PC-3 (cell line): ENCODE measurements at regions of chr9 and their contacts with region 1.

Region 1: DNA sequence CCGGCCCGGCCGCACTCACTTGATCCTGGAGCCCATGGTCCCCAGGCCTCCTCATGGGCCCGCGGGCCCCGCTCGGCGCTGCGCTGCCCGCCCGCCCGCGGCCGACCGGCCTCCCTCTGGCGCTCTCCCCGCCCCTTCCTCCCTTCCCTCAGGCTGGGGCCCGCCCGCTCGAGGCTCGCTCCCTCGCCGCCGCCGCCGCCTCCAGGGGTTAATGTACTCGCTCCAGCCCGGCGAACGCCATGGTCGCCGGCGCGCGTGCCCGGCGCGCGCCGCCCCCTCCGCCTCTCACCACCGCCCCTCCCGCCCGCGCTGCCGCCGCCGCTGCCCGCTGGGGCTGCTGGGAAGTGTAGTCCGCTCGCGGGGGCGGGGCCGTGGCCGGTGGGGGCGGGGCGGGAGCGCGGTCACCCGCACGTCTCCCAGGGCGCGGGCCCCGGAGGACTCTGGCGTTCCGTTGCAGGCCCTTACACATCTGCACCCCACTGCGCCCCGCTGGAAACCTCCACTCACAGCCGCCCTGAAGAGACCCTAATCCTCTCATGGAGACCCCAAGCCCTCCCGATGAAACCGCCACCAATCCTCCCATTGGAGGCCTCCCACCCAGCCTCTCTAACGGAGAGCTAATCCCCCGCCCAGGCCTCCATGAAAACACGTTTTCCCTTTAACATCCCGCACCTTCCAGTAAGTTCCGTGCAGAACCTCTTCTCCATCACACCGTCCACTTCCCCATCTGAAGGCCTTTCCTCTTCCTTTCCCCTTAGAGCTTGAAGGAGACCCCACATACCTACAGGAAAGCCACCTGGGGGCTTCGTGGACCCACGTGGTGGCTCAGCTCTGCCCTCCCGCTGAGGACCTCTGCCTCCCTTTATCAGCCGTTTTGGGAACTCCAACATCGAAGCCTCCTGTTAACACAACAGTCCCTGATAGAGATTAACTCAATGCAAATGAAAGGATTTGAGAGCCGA is at the start of gene DENND1A:
- DNase-seq: peak; percentile 78
- ATAC-seq: peak; percentile 53
- H3K4me3 ChIP-seq: peak within 1 kb of the TSS; percentile 80
- H3K27ac ChIP-seq: peak within 1 kb of the TSS; percentile 43
- H3K4me1 ChIP-seq: peaks cover 73% of the 10 kb centered on the region
- H3K27me3 ChIP-seq: no peaks in the 10 kb centered on the region
- CTCF ChIP-seq: no peak
- total RNA-seq, gene DENND1A: 18.6 and 29.7 TPM in 2 replicates

Region 2: GRCh38 chr9:123544007-123544827 is 385.9 kb before region 1 on chr9:
- CTCF ChIA-PET with region 1: no interaction called
- POLR2A ChIA-PET with region 1: no interaction called
- intact Hi-C with region 1: loop called (anchors 5 kb)
- DNase-seq: peak; percentile 42
- ATAC-seq: peak; percentile 49
- H3K4me3 ChIP-seq: no peak overlapping the region
- H3K27ac ChIP-seq: no peak overlapping the region
- H3K4me1 ChIP-seq: no peaks in the 10 kb centered on the region
- H3K27me3 ChIP-seq: no peaks in the 10 kb centered on the region
- CTCF ChIP-seq: peak; percentile 82

Region 3: GRCh38 chr9:123954518-123955280 is 24.5 kb after region 1 on chr9:
- CTCF ChIA-PET with region 1: no interaction called
- POLR2A ChIA-PET with region 1: no interaction called
- intact Hi-C with region 1: no loop called
- DNase-seq: no peak
- ATAC-seq: no peak
- H3K4me3 ChIP-seq: no peak overlapping the region
- H3K27ac ChIP-seq: no peak overlapping the region
- H3K4me1 ChIP-seq: no peaks in the 10 kb centered on the region
- H3K27me3 ChIP-seq: no peaks in the 10 kb centered on the region
- CTCF ChIP-seq: no peak

Region 4: DNA sequence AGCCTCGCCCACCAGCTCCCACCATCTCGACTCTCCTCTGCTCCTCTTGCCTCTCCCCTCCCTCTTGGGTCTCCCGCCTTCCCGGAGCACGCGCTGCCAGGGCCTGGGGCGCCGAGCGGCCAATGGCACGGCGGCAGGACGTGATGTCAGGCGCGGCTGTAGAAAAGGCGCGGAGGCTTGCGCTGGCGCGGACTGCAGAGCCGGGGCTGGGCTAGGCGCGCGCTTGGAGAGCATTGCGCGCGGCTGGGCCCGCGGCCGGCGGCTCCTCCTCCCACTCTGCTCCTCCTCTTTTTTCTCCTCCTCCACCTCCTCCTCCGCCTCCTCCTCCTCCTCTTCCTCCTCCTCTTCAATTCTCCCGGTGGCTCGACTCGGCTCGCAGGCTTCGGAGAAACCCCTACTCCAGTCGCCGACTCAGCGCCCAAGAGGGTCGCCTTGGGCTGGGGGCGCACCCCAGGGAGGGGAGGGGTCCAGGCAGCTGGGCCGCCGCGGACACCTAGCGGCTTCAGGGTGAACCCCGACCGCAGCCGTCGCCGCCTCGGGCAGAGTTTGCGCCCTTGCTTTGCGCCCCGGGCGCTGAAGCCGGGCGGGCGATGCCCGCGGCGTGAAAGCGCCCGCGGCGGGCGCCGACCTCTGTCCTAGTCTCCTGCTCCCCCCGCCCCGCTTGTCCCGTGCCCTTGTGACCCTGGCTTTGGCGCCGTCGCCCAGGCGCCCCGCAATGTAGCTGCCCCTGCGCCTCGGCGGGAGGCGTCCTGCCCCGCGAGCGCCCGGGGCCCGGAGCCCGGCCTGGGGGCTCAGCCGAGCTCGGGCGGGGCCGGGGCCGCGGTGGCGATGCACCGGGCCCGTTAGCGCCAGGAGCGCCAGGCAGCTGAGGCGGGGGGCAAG is 81.5 kb after region 1 on chr9 and contains the start of gene LHX2:
- CTCF ChIA-PET with region 1: no interaction called
- POLR2A ChIA-PET with region 1: no interaction called
- intact Hi-C with region 1: loop called (anchors 10 kb)
- DNase-seq: peak; percentile 65
- ATAC-seq: peak; percentile 89
- H3K4me3 ChIP-seq: peak within 1 kb of the TSS; percentile 51
- H3K27ac ChIP-seq: no peak within 1 kb of the TSS
- H3K4me1 ChIP-seq: peaks cover 14% of the 10 kb centered on the region; the same call in 1 of the 2 replicates
- H3K27me3 ChIP-seq: peaks cover 43% of the 10 kb centered on the region
- CTCF ChIP-seq: no peak
- total RNA-seq, gene LHX2: 1.1 TPM in 2 replicates

Region 5: GRCh38 chr9:124054582-124055227 is 124.6 kb after region 1 on chr9:
- CTCF ChIA-PET with region 1: interaction called, 10 read pairs
- POLR2A ChIA-PET with region 1: no interaction called
- intact Hi-C with region 1: no loop called
- DNase-seq: peak; percentile 84
- ATAC-seq: peak; percentile 97
- H3K4me3 ChIP-seq: no peak overlapping the region
- H3K27ac ChIP-seq: no peak overlapping the region
- H3K4me1 ChIP-seq: peaks cover 11% of the 10 kb centered on the region; the same call in 1 of the 2 replicates
- H3K27me3 ChIP-seq: no peaks in the 10 kb centered on the region
- CTCF ChIP-seq: peak; percentile 23; the same call in 1 of the 2 replicates